Astrocyte of the cerebellum (primary cell): ENCODE measurements at regions of chr7 and their contacts with region 1.

Region 1: GRCh38 chr7:39894904-39895303 is 55.2 kb upstream of the CDK13 start:
- DNase-seq: no peak
- H3K4me3 ChIP-seq: no peak overlapping the region
- CTCF ChIP-seq: no peak

Region 2: DNA sequence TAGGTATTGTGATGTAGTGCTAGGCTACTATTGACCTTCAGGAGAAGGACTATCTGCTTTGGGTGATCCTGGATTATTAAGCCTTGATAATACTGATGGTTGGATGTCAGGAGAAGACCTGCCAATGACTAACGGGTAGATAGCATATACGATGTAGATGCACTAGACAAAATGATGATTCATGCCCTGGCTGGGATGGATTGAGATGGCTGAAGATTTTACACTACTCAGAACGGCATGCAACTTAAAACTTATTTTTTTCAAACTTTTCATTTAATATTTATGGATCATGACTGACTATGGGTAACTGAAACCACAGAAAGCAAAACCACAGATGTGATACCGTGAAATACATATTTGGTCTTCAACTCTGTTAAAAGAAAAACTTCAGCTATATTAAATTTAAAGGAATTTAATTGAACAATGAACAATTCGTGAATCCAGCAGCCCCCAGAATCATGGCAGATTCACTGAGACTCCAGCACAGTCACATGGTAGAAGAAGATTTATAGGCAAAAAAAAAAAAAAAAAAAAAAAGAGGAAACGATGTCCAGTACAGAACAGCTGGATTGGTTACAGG is 69.4 kb before region 1 on chr7:
- in situ Hi-C with region 1: loop called (anchors 5 kb)
- DNase-seq: no peak
- H3K4me3 ChIP-seq: no peak overlapping the region
- CTCF ChIP-seq: no peak

Region 3: GRCh38 chr7:39855325-39855674 is 39.6 kb before region 1 on chr7:
- in situ Hi-C with region 1: no loop called
- DNase-seq: no peak
- H3K4me3 ChIP-seq: peak overlapping the region; percentile 33
- CTCF ChIP-seq: no peak

Region 4: GRCh38 chr7:40077849-40078248 is 182.9 kb after region 1 on chr7:
- in situ Hi-C with region 1: loop called (anchors 10 kb)
- DNase-seq: no peak
- H3K4me3 ChIP-seq: no peak overlapping the region
- CTCF ChIP-seq: no peak